Spleen (tissue), 13 donors: ENCODE measurements at regions of chr13 and their contacts with region 1.

Region 1: GRCh38 chr13:27826379-27827353 is 34.4 kb downstream of the GSX1 start:
- DNase-seq: peak; percentile 91
- H3K4me3 ChIP-seq: peak overlapping the region in 2 of 8 donors; percentile 16 to 48
- H3K27ac ChIP-seq: no peak overlapping the region
- H3K4me1 ChIP-seq: peaks cover 0 to 21% (median 15%) of the 10 kb centered on the region in 6 donors
- H3K27me3 ChIP-seq: peaks cover 3 to 93% (median 47%) of the 10 kb centered on the region in 7 donors
- CTCF ChIP-seq: peak; percentile 62 to 94 (median 89)
- POLR2A ChIP-seq: no peak

Region 2: GRCh38 chr13:26985285-26985878 is 841.3 kb before region 1 on chr13:
- intact Hi-C with region 1: loop called (anchors 10 kb)
- DNase-seq: no peak
- H3K4me3 ChIP-seq: no peak overlapping the region
- H3K27ac ChIP-seq: no peak overlapping the region
- H3K4me1 ChIP-seq: peaks cover 0 to 26% (median 4%) of the 10 kb centered on the region in 6 donors
- H3K27me3 ChIP-seq: peaks cover 0 to 16% (median 0%) of the 10 kb centered on the region in 7 donors
- CTCF ChIP-seq: peak; percentile 57 to 93 (median 82)
- POLR2A ChIP-seq: no peak

Region 3: GRCh38 chr13:27374650-27375049 is 452.0 kb before region 1 on chr13:
- intact Hi-C with region 1: loop called (anchors 5 kb)
- DNase-seq: no peak
- H3K4me3 ChIP-seq: no peak overlapping the region
- H3K27ac ChIP-seq: no peak overlapping the region
- H3K4me1 ChIP-seq: peaks cover 0 to 15% (median 8%) of the 10 kb centered on the region in 6 donors
- H3K27me3 ChIP-seq: peaks cover 0 to 47% (median 0%) of the 10 kb centered on the region in 7 donors
- CTCF ChIP-seq: peak; percentile 30 to 80 (median 71)
- POLR2A ChIP-seq: no peak

Region 4: GRCh38 chr13:27533155-27533643 is 293.5 kb before region 1 on chr13:
- intact Hi-C with region 1: loop called (anchors 10 kb)
- DNase-seq: peak; percentile 94
- H3K4me3 ChIP-seq: peak overlapping the region in 4 of 8 donors; percentile 3 to 43 (median 20)
- H3K27ac ChIP-seq: no peak overlapping the region
- H3K4me1 ChIP-seq: peaks cover 0 to 11% (median 8%) of the 10 kb centered on the region in 6 donors
- H3K27me3 ChIP-seq: peaks cover 0 to 8% (median 0%) of the 10 kb centered on the region in 7 donors
- CTCF ChIP-seq: peak; percentile 58 to 91 (median 86)
- POLR2A ChIP-seq: no peak

Region 5: GRCh38 chr13:27953676-27954405 is 127.2 kb after region 1 on chr13:
- intact Hi-C with region 1: loop called (anchors 10 kb)
- DNase-seq: peak; percentile 92
- H3K4me3 ChIP-seq: peak overlapping the region; percentile 24 to 73 (median 46)
- H3K27ac ChIP-seq: peak overlapping the region in 7 of 8 donors; percentile 54 to 80 (median 70)
- H3K4me1 ChIP-seq: peaks cover 7 to 26% (median 22%) of the 10 kb centered on the region in 6 donors
- H3K27me3 ChIP-seq: peaks cover 3 to 93% (median 65%) of the 10 kb centered on the region in 7 donors
- CTCF ChIP-seq: peak; percentile 38 to 94 (median 82)
- POLR2A ChIP-seq: no peak

Region 6: DNA sequence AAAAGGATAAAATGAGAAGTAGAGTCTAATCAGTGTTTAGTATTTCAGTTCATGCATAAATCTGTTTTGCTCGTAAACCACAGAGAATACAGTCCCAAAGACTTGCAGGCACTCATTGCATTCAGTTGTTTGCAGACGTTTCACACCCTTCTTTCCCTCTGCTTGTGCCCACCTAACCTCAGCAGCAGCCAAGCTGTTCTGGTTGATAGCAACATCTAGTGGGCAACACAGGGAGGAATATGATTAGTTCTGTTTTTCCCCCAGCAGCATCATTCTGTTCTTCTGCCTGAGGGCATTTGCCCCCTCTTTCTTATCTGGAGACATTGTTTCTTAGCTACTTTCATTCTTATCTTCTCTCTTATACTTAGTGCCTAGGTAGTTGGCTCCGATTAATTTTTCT is 447.3 kb after region 1 on chr13:
- intact Hi-C with region 1: no loop called
- DNase-seq: no peak
- H3K4me3 ChIP-seq: no peak overlapping the region
- H3K27ac ChIP-seq: no peak overlapping the region
- H3K4me1 ChIP-seq: peaks cover 0 to 10% (median 2%) of the 10 kb centered on the region in 6 donors
- H3K27me3 ChIP-seq: no peaks in the 10 kb centered on the region
- CTCF ChIP-seq: no peak
- POLR2A ChIP-seq: no peak